PC-3 (cell line): ENCODE measurements at regions of chr7 and their contacts with region 1.

Region 1: GRCh38 chr7:148527707-148528168 is 62.8 kb upstream of the C7orf33 start:
- DNase-seq: peak; percentile 84
- ATAC-seq: peak; percentile 99
- H3K4me3 ChIP-seq: no peak overlapping the region
- H3K27ac ChIP-seq: no peak overlapping the region
- H3K4me1 ChIP-seq: no peaks in the 10 kb centered on the region
- H3K27me3 ChIP-seq: peaks cover 33% of the 10 kb centered on the region
- CTCF ChIP-seq: peak; percentile 90

Region 2: DNA sequence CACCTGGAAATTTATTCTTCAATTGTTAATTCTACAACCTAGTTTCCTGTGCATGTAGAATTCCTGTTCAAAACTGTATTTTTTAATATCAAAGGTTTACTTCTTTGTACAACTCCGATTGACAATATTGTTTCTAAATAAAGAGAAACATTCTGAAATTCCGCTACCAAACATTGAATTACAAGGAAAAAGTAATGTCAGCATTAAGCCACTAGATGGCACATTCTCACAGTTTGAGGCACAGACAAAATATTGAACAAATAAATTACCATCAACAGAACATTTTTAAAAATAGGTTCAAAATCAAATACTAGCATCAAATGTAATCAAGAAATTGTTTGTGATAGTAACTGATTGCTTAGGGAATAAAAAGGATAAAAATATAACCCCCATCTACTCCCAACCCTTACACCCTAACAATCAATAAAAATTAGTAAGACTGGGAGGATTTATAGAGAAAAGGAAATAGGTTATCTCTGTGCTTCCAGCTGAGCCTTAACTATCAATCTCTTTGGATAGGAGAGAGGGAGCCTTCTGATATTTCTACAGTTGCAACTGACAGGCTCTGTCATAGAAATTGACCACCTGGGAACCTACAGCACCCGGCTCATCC is 23.8 kb before region 1 on chr7:
- CTCF ChIA-PET with region 1: no interaction called
- POLR2A ChIA-PET with region 1: no interaction called
- intact Hi-C with region 1: loop called (anchors 1 kb)
- DNase-seq: peak; percentile 57
- ATAC-seq: no peak
- H3K4me3 ChIP-seq: no peak overlapping the region
- H3K27ac ChIP-seq: no peak overlapping the region
- H3K4me1 ChIP-seq: no peaks in the 10 kb centered on the region
- H3K27me3 ChIP-seq: peaks cover 52% of the 10 kb centered on the region
- CTCF ChIP-seq: peak; percentile 80